ENCODE measurements at regions of chr3 and their contacts with region 1.

Region 1: GRCh38 chr3:107753480-107753879 is 230.7 kb downstream of the BBX start:
- DNase-seq: peak; percentile 47
- H3K4me3 ChIP-seq: no peak overlapping the region
- H3K27ac ChIP-seq: no peak overlapping the region
- H3K4me1 ChIP-seq: no peaks in the 10 kb centered on the region
- H3K27me3 ChIP-seq: no peaks in the 10 kb centered on the region
- CTCF ChIP-seq: peak; percentile 29 to 52
- POLR2A ChIP-seq: no peak

Region 2: DNA sequence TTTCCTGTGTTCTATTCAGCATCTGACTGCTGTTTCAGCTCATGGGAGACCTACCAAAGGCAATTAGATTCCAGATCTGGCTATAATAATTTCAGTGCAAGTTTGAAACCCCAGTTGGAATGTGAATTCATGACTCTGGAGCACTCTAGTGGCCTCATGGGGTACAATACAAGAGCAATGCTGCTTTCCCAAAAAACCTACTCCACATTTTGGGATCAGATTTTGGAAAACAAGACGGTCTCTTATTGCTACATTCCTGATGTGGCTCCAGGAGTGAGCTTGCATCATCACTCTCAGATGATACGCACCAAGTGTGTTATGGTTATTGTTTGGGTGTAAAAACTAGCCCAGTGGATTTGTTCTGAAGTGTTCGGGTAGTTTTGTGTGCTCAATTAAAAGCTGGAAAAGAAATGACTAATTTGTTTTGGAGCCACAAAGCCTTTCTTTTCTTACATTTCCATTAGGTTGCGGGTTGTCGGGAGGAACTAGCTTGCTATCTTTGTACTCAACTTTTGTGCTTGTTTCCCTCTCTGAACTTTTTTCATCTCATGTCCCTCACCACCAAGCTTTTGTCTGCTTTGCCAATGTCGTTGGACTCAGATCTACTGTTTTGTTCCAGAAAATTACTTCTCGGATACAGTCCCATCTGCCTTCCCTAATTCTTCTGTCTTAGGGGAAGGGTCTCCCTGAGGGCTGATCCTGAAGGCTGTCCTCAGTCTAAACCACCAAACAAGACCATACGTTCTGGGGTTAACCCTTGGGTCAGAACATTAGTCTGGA is 41.4 kb after region 1 on chr3:
- CTCF ChIA-PET with region 1: interaction called, 3 read pairs
- POLR2A ChIA-PET with region 1: no interaction called
- dilution Hi-C with region 1: no loop called
- intact Hi-C with region 1: loop called (anchors 1 kb)
- DNase-seq: no peak
- H3K4me3 ChIP-seq: no peak overlapping the region
- H3K27ac ChIP-seq: no peak overlapping the region
- H3K4me1 ChIP-seq: no peaks in the 10 kb centered on the region
- H3K27me3 ChIP-seq: no peaks in the 10 kb centered on the region
- CTCF ChIP-seq: peak in 1 of 2 donors; percentile 4
- POLR2A ChIP-seq: no peak

Region 3: DNA sequence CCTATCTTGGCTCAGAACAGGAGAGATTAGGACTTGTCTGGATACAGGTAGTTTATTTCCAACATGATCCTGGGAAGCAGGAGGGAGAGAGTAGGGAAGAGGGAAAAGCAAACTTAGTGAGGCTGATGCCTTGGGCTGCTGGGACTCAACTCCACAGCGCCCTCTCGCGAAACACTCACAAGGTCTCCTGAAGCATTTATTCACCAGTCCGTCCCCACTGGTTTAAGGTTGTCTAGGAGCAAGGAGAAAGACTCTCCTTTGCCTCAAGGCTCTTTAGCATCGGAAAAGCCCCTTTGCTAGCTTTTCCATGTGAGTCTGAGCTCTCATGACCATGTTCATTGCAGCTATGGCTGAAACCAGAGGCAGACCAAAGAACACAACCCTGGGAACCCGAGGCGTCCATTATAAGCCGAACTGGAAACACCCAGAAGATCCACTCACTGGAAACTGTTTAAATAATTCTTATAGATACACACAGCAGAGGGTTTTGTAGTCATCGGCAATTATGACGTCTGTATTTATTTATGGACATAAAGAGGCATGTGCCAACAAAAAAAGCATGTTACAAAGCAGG is 92.9 kb after region 1 on chr3:
- CTCF ChIA-PET with region 1: interaction called, 7 read pairs
- POLR2A ChIA-PET with region 1: no interaction called
- dilution Hi-C with region 1: no loop called
- intact Hi-C with region 1: loop called (anchors 5 kb)
- DNase-seq: peak; percentile 64
- H3K4me3 ChIP-seq: no peak overlapping the region
- H3K27ac ChIP-seq: no peak overlapping the region
- H3K4me1 ChIP-seq: no peaks in the 10 kb centered on the region
- H3K27me3 ChIP-seq: peaks cover 4% of the 10 kb centered on the region in 2 experiments
- CTCF ChIP-seq: peak; percentile 54 to 79
- POLR2A ChIP-seq: no peak

Region 4: GRCh38 chr3:108489771-108490170 is 736.3 kb after region 1 on chr3:
- CTCF ChIA-PET with region 1: no interaction called
- POLR2A ChIA-PET with region 1: no interaction called
- dilution Hi-C with region 1: no loop called
- intact Hi-C with region 1: no loop called
- DNase-seq: peak; percentile 75
- H3K4me3 ChIP-seq: no peak overlapping the region
- H3K27ac ChIP-seq: no peak overlapping the region
- H3K4me1 ChIP-seq: peaks cover 12% of the 10 kb centered on the region
- H3K27me3 ChIP-seq: no peaks in the 10 kb centered on the region
- CTCF ChIP-seq: peak; percentile 51 to 57
- POLR2A ChIP-seq: no peak

Measured in endothelial cell of umbilical vein (primary cell).